ENCODE measurements at regions of chr12 and their contacts with region 1.

Region 1: GRCh38 chr12:124379938-124380754 is 85.3 kb downstream of the RFLNA start:
- DNase-seq: peak; percentile 55
- H3K4me3 ChIP-seq: no peak overlapping the region
- H3K27ac ChIP-seq: peak overlapping the region; percentile 74 to 81
- H3K4me1 ChIP-seq: peaks cover 36% of the 10 kb centered on the region
- H3K27me3 ChIP-seq: no peaks in the 10 kb centered on the region
- CTCF ChIP-seq: peak in 3 of 4 experiments; percentile 37 to 69 (median 56)
- POLR2A ChIP-seq: no peak

Region 2: DNA sequence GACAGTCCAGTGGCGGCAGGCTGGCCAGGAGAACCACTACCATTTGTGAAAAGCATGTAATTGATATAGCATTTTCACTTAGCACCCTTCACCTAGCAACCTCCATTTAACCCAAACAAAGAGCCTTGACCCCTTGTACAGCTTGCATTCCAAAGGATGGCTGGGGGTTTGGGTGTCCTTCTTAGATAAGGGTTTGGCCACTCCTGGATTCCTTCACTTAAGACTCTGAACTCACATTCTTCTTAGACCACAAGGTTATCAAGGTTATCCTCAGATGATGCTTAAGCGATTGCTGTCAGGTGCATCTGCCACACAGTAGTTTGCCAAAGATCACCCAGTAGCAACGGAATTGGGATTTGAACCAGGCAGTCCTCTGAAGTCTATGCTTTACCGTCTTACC is 304.3 kb before region 1 on chr12:
- intact Hi-C with region 1: no loop called
- DNase-seq: no peak
- H3K4me3 ChIP-seq: no peak overlapping the region
- H3K27ac ChIP-seq: no peak overlapping the region
- H3K4me1 ChIP-seq: no peaks in the 10 kb centered on the region
- H3K27me3 ChIP-seq: no peaks in the 10 kb centered on the region
- CTCF ChIP-seq: no peak
- POLR2A ChIP-seq: no peak

Region 3: DNA sequence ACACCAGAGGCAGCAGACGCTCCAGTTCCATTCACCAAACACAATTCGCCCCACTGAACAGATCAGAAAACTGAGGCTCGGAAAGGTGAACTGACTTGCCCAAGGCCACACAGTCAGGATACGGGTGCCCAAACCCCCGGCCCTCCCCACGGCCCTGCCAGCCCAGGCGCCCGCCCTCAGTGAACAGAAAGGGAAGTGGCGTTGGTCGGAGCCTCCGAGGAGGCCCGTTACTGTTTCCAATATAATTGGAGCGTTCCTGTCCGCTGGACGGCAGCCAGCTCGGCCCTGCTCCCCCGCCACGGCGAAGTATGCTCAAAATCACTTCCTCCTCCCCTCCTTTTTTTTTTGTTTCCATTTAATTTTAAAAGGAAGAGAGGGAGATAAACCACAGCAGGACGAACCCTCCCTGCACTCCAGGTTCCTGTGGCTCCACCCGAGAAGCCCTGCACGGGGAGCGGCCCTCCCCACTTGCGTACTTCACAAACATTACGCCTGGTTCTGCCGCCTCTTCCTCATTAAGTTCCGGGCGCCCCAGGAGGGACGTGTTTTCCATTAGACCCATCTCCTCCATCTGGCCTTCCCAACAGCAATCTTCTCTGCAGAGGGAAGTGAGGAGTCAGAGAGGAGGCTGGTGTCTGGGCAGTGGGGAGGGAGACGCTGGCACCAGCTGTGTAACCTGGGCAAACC is 126.1 kb after region 1 on chr12:
- intact Hi-C with region 1: loop called (anchors 5 kb)
- DNase-seq: peak; percentile 73
- H3K4me3 ChIP-seq: no peak overlapping the region
- H3K27ac ChIP-seq: peak overlapping the region; percentile 85 to 86
- H3K4me1 ChIP-seq: peaks cover 54% of the 10 kb centered on the region
- H3K27me3 ChIP-seq: no peaks in the 10 kb centered on the region
- CTCF ChIP-seq: no peak
- POLR2A ChIP-seq: peak; percentile 51

Measured in prostate gland (tissue), 2 donors.